A673 (cell line): ENCODE measurements at regions of chr16 and their contacts with region 1.

Region 1: DNA sequence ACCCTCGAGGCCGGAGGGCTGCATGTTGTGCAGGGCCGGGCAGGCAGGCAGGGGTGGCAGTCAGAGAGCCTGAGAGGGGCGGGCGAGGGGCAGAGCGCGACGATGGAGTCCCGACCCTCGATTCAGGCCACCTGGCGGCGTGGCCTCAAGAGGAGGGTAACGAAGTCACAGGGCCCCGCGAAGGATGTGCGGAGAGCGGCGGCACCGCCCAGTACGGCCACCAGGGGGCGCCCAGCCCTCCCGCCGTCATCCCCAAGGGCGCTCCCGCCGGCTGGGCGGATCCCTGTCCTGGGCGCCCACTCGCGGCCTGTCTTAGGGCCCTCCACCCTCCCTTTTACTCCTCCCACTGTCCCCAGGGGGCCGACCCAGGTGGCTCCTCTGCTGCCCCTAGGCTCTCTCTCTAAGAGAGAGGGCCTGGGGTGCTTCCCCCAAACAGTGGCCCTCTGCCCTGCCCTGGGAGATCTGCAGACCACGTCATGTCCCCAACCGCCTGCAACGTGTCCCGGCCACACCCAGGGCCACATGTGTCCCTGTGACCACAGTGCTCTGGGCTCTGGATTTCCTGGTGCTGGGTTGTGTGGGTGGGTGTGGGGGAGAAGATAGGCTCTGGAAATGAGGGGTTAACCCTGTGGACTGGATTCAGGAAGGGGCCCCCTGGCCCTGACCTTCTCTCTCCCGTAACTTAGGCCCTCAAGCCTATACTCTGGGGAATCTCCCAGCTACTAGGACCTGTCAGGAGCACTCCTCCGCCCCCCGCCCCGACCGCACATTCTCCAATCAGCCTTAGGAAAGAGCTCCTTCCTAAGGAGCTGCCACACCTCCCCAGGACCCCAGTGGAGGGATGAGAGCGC is 5.9 kb downstream of the DPEP2 start:
- DNase-seq: peak; percentile 82
- H3K4me3 ChIP-seq: no peak overlapping the region
- H3K27ac ChIP-seq: no peak overlapping the region
- H3K4me1 ChIP-seq: peaks cover 5% of the 10 kb centered on the region
- H3K27me3 ChIP-seq: no peaks in the 10 kb centered on the region
- CTCF ChIP-seq: peak; percentile 98

Region 2: DNA sequence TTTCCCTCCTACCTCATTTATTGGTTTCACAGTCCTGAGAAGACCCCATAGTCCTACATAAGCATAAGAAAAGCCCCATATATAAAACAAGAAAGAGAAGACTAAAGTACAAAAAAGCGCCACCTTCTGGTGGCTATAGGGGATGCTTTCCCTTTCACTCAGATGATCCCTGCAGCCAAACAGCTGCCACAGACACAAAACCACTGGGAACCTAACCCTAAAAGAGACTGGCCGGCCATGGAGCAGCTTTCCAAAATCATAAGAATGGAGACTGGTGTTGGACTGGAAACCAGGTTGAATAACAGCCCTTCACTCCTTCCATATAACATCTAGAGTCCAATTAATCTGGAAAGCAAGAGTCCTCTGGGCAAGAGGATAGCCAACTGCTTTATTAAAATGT is 1253.4 kb before region 1 on chr16:
- CTCF ChIA-PET with region 1: no interaction called
- POLR2A ChIA-PET with region 1: no interaction called
- intact Hi-C with region 1: no loop called
- DNase-seq: peak; percentile 68
- H3K4me3 ChIP-seq: no peak overlapping the region
- H3K27ac ChIP-seq: peak overlapping the region; percentile 25
- H3K4me1 ChIP-seq: peaks cover 14% of the 10 kb centered on the region
- H3K27me3 ChIP-seq: no peaks in the 10 kb centered on the region
- CTCF ChIP-seq: peak; percentile 88

Region 3: GRCh38 chr16:67935402-67936123 is 57.9 kb before region 1 on chr16:
- CTCF ChIA-PET with region 1: no interaction called
- POLR2A ChIA-PET with region 1: no interaction called
- intact Hi-C with region 1: no loop called
- DNase-seq: peak; percentile 96
- H3K4me3 ChIP-seq: peak overlapping the region; percentile 85
- H3K27ac ChIP-seq: peak overlapping the region; percentile 75
- H3K4me1 ChIP-seq: peaks cover 16% of the 10 kb centered on the region
- H3K27me3 ChIP-seq: no peaks in the 10 kb centered on the region
- CTCF ChIP-seq: no peak

Region 4: DNA sequence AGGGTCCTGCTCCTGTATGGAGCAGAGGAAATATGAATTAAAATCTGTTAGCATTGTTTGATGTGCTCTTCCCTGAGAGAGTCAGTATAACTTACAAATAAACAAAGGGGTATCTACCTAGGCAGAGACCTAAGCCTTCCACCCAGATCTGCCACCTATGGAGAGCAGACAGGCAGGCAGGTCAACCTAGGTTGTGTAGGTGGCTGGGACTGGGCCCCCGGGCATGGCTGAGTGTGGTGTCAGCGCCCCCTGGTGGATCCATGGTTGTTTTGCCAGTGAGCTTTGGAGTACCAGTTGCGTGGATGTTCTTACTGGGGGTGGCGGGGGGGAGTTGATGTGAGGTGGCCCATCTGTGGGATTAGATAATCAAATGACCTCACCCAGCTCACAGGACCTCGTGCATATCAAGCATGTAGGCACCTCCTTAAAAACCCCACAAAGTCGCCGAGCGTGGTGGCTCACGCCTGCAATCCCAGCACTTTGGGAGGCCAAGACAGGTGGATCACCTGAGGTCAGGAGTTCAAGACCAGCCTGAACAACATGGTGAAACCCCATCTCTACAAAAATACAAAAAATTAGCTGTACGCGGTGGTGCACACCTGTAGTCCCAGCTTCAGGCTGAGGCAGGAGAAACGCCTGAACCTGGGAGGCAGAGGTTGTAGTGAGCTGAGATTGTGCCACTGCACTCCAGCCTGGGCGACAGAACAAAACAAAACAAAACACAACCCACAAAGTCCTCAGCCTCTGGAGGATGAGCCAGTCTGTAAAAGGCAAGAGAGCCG is 47.3 kb after region 1 on chr16:
- CTCF ChIA-PET with region 1: interaction called, 3 read pairs
- POLR2A ChIA-PET with region 1: no interaction called
- intact Hi-C with region 1: loop called (anchors 1 kb)
- DNase-seq: peak; percentile 72
- H3K4me3 ChIP-seq: no peak overlapping the region
- H3K27ac ChIP-seq: no peak overlapping the region
- H3K4me1 ChIP-seq: no peaks in the 10 kb centered on the region
- H3K27me3 ChIP-seq: no peaks in the 10 kb centered on the region
- CTCF ChIP-seq: peak; percentile 91

Region 5: DNA sequence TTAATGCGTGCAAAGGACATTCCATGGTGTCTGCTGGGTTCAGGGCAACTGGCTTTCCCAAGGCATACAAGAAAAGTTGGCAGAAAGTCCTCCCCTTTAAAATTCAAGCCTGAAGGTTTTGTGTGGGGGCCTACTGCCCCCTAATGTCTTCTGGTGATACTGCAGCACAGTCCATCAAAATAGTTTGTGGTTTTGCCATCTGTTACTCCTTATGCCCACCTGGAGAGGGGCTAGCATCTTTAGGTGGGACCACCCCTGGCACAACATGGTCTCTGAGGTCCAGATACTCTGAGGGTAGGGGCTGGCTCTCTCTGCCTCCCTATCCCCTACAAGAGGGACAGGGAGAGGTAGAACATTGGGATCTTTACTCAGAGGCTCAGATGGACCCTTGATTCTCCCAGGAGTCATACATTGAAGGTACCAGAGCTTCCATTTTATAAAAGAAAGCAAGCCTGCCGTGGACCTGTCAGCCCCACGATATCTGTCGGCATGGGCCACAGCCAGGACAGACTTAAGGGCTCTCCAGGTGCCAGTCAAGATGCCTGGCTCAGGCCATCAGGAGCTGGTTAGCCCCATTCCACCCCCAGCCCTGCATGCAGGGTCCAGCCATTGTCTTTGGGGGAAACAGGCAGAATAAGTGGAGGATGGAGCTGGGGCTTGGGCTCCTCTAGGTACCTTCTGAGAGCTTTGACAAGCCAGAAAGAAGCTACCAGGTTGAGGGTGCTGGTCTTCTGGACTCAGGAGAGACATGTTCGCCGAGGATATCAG is 236.2 kb after region 1 on chr16:
- CTCF ChIA-PET with region 1: no interaction called
- POLR2A ChIA-PET with region 1: no interaction called
- intact Hi-C with region 1: loop called (anchors 1 kb)
- DNase-seq: peak; percentile 73
- H3K4me3 ChIP-seq: no peak overlapping the region
- H3K27ac ChIP-seq: no peak overlapping the region
- H3K4me1 ChIP-seq: no peaks in the 10 kb centered on the region
- H3K27me3 ChIP-seq: no peaks in the 10 kb centered on the region
- CTCF ChIP-seq: peak; percentile 90

Region 6: DNA sequence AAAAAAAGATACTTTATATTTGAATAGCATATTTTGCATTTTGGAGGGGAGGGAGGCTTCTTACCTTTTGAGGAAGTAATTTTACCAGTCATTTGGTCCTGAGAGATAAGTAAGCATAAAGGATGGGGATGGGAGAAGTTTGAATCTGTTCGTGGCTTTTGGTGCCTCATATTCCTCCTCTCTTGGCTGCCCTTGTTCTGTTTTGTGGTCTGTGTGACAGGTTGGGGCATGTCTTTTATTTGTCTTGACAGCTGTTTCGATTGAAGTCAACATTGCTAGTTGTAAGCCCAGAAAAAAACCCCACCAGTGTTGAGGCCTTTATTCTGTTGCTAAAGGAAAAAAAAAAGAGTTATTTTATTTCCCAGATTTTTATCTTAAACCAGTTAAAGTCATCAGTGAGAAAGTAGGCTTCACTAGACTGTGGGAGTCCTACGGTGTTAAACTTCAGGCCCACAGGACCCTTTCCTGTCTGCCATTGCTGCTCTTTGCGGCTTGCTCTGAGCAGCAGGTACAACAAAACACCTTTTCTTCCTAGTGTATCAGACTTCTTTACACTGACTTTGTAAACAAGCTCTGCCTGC is 282.3 kb after region 1 on chr16:
- CTCF ChIA-PET with region 1: no interaction called
- POLR2A ChIA-PET with region 1: no interaction called
- intact Hi-C with region 1: no loop called
- DNase-seq: no peak
- H3K4me3 ChIP-seq: no peak overlapping the region
- H3K27ac ChIP-seq: no peak overlapping the region
- H3K4me1 ChIP-seq: no peaks in the 10 kb centered on the region
- H3K27me3 ChIP-seq: no peaks in the 10 kb centered on the region
- CTCF ChIP-seq: no peak